ENCODE measurements at regions of chr11 and their contacts with region 1.

Region 1: GRCh38 chr11:3037040-3037944 is 19.9 kb downstream of the CARS1 start:
- DNase-seq: peak; percentile 93
- ATAC-seq: peak; percentile 71

Region 2: DNA sequence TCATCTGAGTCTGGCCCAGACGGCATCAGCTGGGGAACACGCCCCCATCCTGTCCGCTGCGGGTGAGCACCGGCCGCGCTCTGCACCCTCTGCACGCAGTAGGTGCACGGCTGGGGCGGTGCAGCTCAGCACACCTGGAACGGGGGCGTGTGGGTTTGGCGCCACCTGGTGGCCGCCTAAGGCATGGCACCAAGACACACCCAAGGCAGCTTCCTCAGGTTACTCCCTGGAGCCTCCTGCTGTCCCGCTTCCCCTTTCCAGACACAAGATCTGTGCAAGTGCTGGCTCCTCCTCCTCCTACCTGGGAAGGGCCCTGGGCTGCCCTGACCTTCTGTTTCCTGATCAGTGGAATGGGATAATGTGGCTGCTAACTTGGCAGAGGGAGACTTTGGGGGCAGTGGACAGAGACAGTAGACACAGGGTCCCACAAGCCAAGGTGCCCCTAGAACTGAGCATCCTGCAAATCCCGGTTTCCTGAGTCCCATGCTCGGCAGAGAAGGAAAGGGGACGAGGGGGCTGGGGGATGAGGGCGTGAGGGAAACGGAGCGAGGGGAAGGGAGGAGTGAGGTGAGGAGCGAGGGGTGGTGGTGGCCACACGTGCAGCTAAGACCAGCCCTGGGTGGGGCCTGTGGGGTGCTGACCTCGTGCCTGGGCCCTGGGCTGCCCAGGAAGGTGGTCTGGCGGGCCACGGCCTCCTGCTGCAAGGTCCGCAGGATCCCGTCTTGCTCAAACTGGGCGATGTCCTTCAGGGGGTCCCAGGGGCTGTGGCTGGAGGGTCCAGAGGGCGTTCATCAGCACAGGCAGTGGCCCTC is 54.7 kb after region 1 on chr11:
- intact Hi-C with region 1: loop called (anchors 1 kb)
- DNase-seq: peak; percentile 87
- ATAC-seq: peak; percentile 59

Region 3: DNA sequence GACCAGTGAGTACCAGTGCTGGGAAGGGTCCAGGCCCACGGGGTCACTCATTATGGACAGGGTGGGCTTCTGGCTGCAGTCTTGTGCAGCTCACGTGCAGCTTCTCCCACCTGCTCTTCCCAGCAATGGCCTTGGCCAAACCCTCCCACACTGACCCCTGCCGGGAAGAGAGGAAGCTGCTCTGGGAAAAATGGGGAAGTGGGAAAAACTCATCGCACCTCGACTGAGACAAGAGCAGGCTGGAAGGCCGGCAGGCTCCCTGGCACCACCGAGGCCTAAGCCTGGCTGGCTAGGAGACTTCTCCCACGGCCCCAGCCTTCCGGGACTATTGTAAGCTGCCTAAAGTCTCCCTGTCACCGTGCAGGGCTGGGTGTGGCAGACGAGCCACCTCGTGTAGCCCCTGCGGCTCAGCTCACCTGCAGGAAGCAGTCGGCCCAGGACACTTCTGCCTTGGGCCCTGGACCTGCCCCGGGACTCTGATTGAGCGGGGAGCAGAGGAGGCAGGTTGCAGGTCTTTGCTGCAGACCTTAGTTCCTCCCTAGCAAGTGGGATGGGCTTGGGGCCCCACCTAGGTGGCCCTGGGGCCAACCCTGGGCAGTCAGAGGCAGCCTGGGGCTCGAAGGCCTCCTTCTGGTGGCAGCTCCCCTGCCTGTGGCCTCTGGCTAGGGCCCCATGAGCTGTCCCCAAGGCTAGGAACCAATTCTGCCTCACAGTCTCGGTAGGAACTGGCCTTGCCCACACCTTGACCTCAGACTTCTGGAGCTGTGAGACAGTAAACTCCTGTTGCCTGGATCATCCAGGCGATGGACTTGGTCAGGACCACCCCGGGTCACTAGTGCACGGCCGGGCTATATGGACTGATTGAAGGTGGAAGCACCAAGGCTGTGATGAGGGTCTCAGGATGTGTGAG is 158.2 kb after region 1 on chr11:
- intact Hi-C with region 1: loop called (anchors 5 kb)
- DNase-seq: no peak
- ATAC-seq: no peak

Region 4: GRCh38 chr11:3217676-3218482 is 180.6 kb after region 1 on chr11:
- intact Hi-C with region 1: loop called (anchors 2 kb)
- DNase-seq: no peak
- ATAC-seq: no peak

Measured in Right ventricle myocardium inferior (tissue), 1 donor.